Motor neuron (in vitro differentiated cells): ENCODE measurements at regions of chr1 and their contacts with region 1.

Region 1: DNA sequence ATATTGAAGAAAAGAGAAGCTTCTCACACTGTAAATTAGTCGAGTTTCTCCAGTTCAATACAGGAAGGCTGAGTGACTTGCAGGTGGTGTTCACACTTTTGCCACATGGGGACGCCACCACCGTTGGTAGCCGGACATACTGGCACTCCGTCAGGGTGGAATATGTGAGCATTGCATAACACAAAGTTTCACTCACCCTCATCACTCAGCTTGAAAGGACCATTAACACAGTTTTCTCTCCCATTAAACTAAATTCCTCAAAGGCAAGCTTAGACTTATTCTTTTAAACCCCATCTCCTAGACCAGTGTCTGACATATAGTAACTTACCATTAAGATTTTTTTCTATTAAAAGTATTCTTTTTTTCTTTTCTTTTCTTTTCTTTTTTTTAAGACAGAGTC is 105.3 kb upstream of the SERBP1 start:
- ATAC-seq: peak; percentile 61 to 92 (median 76)
- H3K4me3 ChIP-seq: no peak overlapping the region
- H3K27ac ChIP-seq: no peak overlapping the region
- H3K4me1 ChIP-seq: peaks cover 0 to 5% of the 10 kb centered on the region in 2 donors

Region 2: DNA sequence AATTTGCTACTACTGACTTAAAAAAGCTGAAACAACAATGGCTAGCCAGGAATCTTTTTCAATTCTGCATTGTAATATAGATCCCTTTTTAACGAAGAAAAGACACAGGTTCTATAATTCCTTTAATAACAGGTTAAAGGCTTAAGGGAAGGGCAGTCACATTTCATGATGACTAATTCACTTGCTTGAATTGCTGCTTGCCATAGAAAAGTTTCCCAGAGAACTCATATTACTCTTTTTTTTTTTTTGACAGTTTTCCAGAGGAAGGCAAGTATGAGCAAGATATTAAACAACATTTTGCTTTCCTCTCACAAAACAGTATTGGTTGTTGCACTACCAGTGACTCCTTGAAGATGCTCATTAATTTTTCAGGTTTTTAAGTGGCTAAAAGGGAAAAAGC is 308.3 kb before region 1 on chr1:
- in situ Hi-C with region 1: no loop called
- ATAC-seq: peak in 2 of 8 experiments; percentile 56 to 73
- H3K4me3 ChIP-seq: no peak overlapping the region
- H3K27ac ChIP-seq: no peak overlapping the region
- H3K4me1 ChIP-seq: peaks cover 14 to 24% of the 10 kb centered on the region in 2 donors

Region 3: DNA sequence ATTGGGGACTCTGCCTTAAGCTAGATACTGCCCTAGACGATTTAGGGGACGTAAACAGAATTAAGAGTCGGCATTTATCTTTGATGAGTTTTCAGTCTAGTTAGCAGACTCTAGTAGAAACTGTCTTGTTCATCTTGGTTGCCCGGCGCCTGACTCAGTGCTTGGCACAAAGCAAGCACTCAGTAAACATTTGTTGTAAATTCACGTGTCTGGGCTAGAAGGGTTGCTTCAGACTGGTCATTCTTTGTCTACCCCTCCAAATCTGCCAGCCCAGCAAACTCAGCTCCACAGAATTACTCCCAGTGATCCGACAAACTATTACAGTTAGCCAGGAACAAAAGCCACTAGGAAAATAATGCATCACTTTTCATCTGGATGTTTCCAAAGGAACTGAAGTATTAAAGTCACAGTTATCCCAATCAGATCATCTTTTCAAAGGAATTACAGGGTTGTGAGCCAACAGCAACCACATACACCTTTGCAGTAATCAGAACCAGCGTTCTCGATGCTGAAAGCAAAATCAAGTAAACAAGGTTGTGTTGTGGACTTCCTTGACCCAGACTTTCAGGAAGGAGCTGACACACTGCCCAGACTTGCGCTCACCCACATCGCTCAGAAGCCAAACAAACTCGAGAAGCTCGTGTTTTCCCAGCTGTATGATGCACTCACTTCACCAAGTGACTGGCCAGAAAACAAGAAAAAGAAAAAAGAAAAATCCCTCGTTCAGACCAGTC is 83.0 kb after region 1 on chr1:
- in situ Hi-C with region 1: no loop called
- ATAC-seq: peak in 4 of 8 experiments; percentile 33 to 92 (median 90)
- H3K4me3 ChIP-seq: no peak overlapping the region
- H3K27ac ChIP-seq: no peak overlapping the region
- H3K4me1 ChIP-seq: no peaks in the 10 kb centered on the region

Region 4: DNA sequence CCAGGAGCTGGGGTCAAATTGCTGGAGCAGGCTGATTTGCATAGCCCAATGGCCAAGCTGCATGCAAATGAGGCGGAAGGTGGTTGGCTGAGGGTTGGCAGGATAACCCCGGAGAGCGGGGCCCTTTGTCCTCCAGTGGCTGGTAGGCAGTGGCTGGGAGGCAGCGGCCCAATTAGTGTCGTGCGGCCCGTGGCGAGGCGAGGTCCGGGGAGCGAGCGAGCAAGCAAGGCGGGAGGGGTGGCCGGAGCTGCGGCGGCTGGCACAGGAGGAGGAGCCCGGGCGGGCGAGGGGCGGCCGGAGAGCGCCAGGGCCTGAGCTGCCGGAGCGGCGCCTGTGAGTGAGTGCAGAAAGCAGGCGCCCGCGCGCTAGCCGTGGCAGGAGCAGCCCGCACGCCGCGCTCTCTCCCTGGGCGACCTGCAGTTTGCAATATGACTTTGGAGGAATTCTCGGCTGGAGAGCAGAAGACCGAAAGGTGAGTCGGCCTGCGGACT is 149.6 kb after region 1 on chr1 and contains the start of gene GADD45A:
- in situ Hi-C with region 1: loop called in 2 of 9 experiments (anchors 10 to 25 kb)
- ATAC-seq: peak; percentile 66 to 93 (median 86)
- H3K4me3 ChIP-seq: peak within 1 kb of the TSS; percentile 54 to 67 (median 59)
- H3K27ac ChIP-seq: peak within 1 kb of the TSS; percentile 93 to 96
- H3K4me1 ChIP-seq: peaks cover 12 to 16% of the 10 kb centered on the region in 2 donors
- total RNA-seq, gene GADD45A: 35.9 to 144 (median 56.1) TPM

Region 5: GRCh38 chr1:67748630-67749029 is 213.2 kb after region 1 on chr1:
- in situ Hi-C with region 1: loop called in 6 of 9 experiments (anchors 10 to 25 kb)
- ATAC-seq: peak; percentile 26 to 89 (median 48)
- H3K4me3 ChIP-seq: no peak overlapping the region
- H3K27ac ChIP-seq: no peak overlapping the region
- H3K4me1 ChIP-seq: peaks cover 20 to 21% of the 10 kb centered on the region in 2 donors